ENCODE measurements at regions of chr18 and their contacts with region 1.

Region 1: GRCh38 chr18:21194871-21195771 is 46.9 kb upstream of the GREB1L start:
- DNase-seq: no peak
- ATAC-seq: no peak
- H3K4me3 ChIP-seq: no peak overlapping the region
- H3K27ac ChIP-seq: no peak overlapping the region
- H3K4me1 ChIP-seq: no peaks in the 10 kb centered on the region
- H3K27me3 ChIP-seq: no peaks in the 10 kb centered on the region

Region 2: GRCh38 chr18:21444465-21445023 is 249.4 kb after region 1 on chr18:
- intact Hi-C with region 1: loop called (anchors 2 to 5 kb)
- DNase-seq: no peak
- ATAC-seq: peak in 1 of 2 donors; percentile 51
- H3K4me3 ChIP-seq: no peak overlapping the region
- H3K27ac ChIP-seq: no peak overlapping the region
- H3K4me1 ChIP-seq: peaks cover 2% of the 10 kb centered on the region
- H3K27me3 ChIP-seq: no peaks in the 10 kb centered on the region

Region 3: DNA sequence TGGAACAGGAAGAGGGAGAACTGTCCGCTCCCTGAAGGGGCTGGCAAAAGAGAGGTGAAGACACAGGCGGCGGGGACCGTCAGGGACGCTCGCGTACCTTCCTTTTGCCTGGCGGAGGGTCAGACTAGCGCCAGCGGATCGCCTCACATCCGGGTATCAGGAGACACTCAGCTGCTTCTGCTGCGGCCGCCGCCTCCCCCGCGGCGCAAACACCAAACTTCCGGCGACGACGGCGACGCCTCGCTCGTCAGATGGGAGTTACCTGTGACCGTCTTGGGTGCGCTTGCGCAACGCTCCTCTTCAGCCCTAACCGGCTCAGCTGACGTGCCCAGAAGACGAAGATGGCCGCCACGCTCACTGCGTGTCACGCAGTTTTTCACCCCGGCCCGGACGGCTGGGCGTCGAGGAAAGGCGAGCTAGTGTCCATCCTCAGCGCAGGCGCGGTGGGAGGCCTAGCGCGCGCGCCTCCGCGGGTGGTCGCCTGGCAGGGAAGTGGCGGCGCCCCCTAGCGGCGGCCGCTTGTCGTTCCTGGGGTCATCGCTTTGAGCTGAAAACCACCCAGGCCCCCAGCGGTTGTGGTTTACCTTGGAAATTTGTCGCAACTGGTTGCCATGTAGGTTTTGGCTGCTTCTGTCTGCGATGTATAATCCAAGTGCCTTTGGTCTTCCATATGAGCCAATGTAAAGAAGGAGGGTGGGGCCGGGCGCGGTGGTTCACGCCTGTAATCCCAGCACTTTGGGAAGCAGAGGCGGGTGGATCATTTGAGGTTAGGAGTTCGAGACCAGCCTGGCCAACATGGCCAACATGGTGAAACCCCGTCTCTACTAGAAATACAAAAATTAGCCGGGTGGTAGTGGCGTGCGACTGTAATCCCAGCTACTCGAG is 405.6 kb after region 1 on chr18 and contains the start of gene ESCO1:
- intact Hi-C with region 1: loop called in 1 of 4 experiments (anchors 10 kb)
- DNase-seq: peak; percentile 96 to 97 (median 97)
- ATAC-seq: peak; percentile 95 to 96
- H3K4me3 ChIP-seq: peak within 1 kb of the TSS; percentile 50
- H3K27ac ChIP-seq: peak within 1 kb of the TSS; percentile 84
- H3K4me1 ChIP-seq: no peaks in the 10 kb centered on the region
- H3K27me3 ChIP-seq: no peaks in the 10 kb centered on the region
- total RNA-seq, gene ESCO1: 10.3 to 13.4 (median 11.5) TPM